ENCODE measurements at regions of chr7 and their contacts with region 1.

Region 1: GRCh38 chr7:111735661-111736551 is 173.6 kb upstream of the IMMP2L start:
- DNase-seq: peak in 8 of 9 donors; percentile 24 to 66 (median 46)
- ATAC-seq: peak; percentile 67
- H3K4me3 ChIP-seq: no peak overlapping the region
- H3K4me3 Mint-ChIP-seq: no peak overlapping the region
- H3K27ac ChIP-seq: no peak overlapping the region
- H3K27ac Mint-ChIP-seq: no peak overlapping the region
- H3K4me1 ChIP-seq: no peaks in the 10 kb centered on the region
- H3K4me1 Mint-ChIP-seq: no peaks in the 10 kb centered on the region
- H3K27me3 ChIP-seq: no peaks in the 10 kb centered on the region
- H3K27me3 Mint-ChIP-seq: peaks cover 2 to 23% (median 10%) of the 10 kb centered on the region in 5 donors

Region 2: DNA sequence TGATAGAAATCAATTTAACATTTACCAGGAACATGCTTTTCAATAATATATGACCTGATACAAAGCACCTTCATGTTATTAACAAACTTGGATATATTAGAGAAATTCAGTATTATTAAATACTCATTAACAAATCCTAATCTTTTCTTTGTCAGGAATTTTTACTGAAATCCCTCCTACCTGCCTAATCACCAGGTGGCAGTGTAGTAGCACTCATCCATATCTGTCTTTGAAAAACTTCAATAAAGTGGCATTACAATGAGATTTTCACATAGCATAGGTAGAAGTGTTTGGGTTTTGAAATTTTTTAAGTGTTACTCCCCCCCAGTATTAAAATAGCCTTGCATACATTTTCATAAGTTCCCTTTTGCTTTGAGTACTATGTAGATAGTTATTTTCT is 1891.5 kb before region 1 on chr7:
- CTCF ChIA-PET with region 1: interaction called, 6 read pairs
- POLR2A ChIA-PET with region 1: no interaction called
- intact Hi-C with region 1: loop called in 1 of 2 experiments (anchors 1 kb)
- DNase-seq: peak in 4 of 9 donors; percentile 3 to 25 (median 6)
- ATAC-seq: no peak
- H3K4me3 ChIP-seq: no peak overlapping the region
- H3K4me3 Mint-ChIP-seq: no peak overlapping the region
- H3K27ac ChIP-seq: no peak overlapping the region
- H3K27ac Mint-ChIP-seq: no peak overlapping the region
- H3K4me1 ChIP-seq: no peaks in the 10 kb centered on the region
- H3K4me1 Mint-ChIP-seq: no peaks in the 10 kb centered on the region
- H3K27me3 ChIP-seq: no peaks in the 10 kb centered on the region
- H3K27me3 Mint-ChIP-seq: peaks cover 0 to 18% (median under 1%) of the 10 kb centered on the region in 5 donors

Region 3: GRCh38 chr7:110090110-110090769 is 1645.7 kb before region 1 on chr7:
- CTCF ChIA-PET with region 1: no interaction called
- POLR2A ChIA-PET with region 1: no interaction called
- intact Hi-C with region 1: loop called in 1 of 2 experiments (anchors 10 kb)
- DNase-seq: peak in 6 of 9 donors; percentile 11 to 28 (median 15)
- ATAC-seq: no peak
- H3K4me3 ChIP-seq: no peak overlapping the region
- H3K4me3 Mint-ChIP-seq: no peak overlapping the region
- H3K27ac ChIP-seq: no peak overlapping the region
- H3K27ac Mint-ChIP-seq: no peak overlapping the region
- H3K4me1 ChIP-seq: no peaks in the 10 kb centered on the region
- H3K4me1 Mint-ChIP-seq: no peaks in the 10 kb centered on the region
- H3K27me3 ChIP-seq: no peaks in the 10 kb centered on the region
- H3K27me3 Mint-ChIP-seq: peaks cover 0 to 10% (median 3%) of the 10 kb centered on the region in 5 donors

Region 4: GRCh38 chr7:110590415-110590814 is 1145.5 kb before region 1 on chr7:
- CTCF ChIA-PET with region 1: no interaction called
- POLR2A ChIA-PET with region 1: no interaction called
- intact Hi-C with region 1: loop called in 1 of 2 experiments (anchors 1 kb)
- DNase-seq: peak in 4 of 9 donors; percentile 4 to 11 (median 10)
- ATAC-seq: no peak
- H3K4me3 ChIP-seq: no peak overlapping the region
- H3K4me3 Mint-ChIP-seq: no peak overlapping the region
- H3K27ac ChIP-seq: no peak overlapping the region
- H3K27ac Mint-ChIP-seq: no peak overlapping the region
- H3K4me1 ChIP-seq: no peaks in the 10 kb centered on the region
- H3K4me1 Mint-ChIP-seq: peaks cover 0 to 7% (median 0%) of the 10 kb centered on the region in 7 donors
- H3K27me3 ChIP-seq: no peaks in the 10 kb centered on the region
- H3K27me3 Mint-ChIP-seq: peaks cover 0 to 4% (median 0%) of the 10 kb centered on the region in 5 donors

Region 5: DNA sequence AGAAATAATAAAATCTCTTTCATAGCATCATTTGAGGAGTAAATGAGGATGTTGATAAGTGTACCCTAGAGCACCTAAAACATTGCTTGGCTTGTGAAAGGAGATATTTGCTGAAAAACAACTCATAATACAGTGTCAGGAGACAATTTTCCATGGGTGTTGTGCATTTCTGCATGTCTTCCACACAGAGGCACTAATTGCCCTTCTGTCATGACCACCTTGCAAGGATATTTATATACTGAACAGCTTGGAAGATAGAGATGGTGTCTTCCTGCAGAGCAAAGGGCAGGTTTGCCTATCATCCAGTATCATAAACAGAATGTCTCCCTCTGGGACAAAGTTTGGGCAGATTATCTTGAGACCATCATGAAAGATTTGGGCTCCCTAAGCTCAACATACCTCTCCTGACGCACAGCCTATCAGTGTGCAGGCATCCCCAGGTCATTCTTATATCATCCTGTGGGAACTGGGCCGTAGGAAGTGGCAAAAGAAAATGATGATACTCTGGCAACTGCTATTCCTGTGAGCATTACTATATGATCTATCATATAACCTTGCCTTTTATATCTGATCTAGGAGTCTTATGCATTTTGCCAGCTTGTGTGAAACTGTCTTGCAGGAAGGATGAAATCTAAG is 1140.1 kb before region 1 on chr7:
- CTCF ChIA-PET with region 1: no interaction called
- POLR2A ChIA-PET with region 1: no interaction called
- intact Hi-C with region 1: loop called in 1 of 2 experiments (anchors 1 kb)
- DNase-seq: peak in 5 of 9 donors; percentile 16 to 39 (median 21)
- ATAC-seq: no peak
- H3K4me3 ChIP-seq: no peak overlapping the region
- H3K4me3 Mint-ChIP-seq: no peak overlapping the region
- H3K27ac ChIP-seq: no peak overlapping the region
- H3K27ac Mint-ChIP-seq: no peak overlapping the region
- H3K4me1 ChIP-seq: no peaks in the 10 kb centered on the region
- H3K4me1 Mint-ChIP-seq: peaks cover 0 to 15% (median 0%) of the 10 kb centered on the region in 7 donors
- H3K27me3 ChIP-seq: no peaks in the 10 kb centered on the region
- H3K27me3 Mint-ChIP-seq: peaks cover 0 to 11% (median 0%) of the 10 kb centered on the region in 5 donors